AG04449 (cell line): ENCODE measurements at regions of chrX and their contacts with region 1.

Region 1: GRCh38 chrX:136694431-136695087 is 46.6 kb downstream of the CD40LG start:
- DNase-seq: no peak
- H3K4me3 ChIP-seq: no peak overlapping the region
- CTCF ChIP-seq: peak; percentile 45

Region 2: GRCh38 chrX:136608295-136609171 is 86.0 kb before region 1 on chrX:
- CTCF ChIA-PET with region 1: interaction called, 10 read pairs
- POLR2A ChIA-PET with region 1: no interaction called
- DNase-seq: no peak
- H3K4me3 ChIP-seq: no peak overlapping the region
- CTCF ChIP-seq: peak; percentile 4

Region 3: DNA sequence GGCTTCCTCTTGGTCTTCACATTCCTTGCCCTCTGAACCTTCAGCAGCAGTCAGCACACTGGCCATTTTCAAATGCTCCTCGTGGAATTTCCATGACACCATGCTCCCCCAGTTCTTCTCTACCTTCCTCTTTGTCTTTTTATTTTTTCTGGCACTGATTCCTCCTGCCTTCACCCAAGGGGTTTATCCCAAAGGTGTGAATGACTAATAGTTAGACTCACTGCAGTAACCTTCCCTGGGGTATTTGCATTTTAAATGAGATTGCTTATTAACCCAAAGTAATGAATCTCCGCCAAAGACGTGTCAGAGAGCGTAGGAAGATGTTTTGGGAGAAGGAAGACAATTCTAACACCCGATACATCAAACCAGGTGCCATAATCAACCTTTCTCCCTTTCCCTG is 10.4 kb before region 1 on chrX:
- CTCF ChIA-PET with region 1: interaction called, 11 read pairs
- POLR2A ChIA-PET with region 1: no interaction called
- DNase-seq: no peak
- H3K4me3 ChIP-seq: no peak overlapping the region
- CTCF ChIP-seq: no peak

Region 4: GRCh38 chrX:136711147-136711546 is 16.6 kb after region 1 on chrX:
- CTCF ChIA-PET with region 1: interaction called, 11 read pairs
- POLR2A ChIA-PET with region 1: interaction called, 3 read pairs
- DNase-seq: no peak
- H3K4me3 ChIP-seq: no peak overlapping the region
- CTCF ChIP-seq: peak; percentile 50